ENCODE measurements at regions of chrX and their contacts with region 1.

Region 1: DNA sequence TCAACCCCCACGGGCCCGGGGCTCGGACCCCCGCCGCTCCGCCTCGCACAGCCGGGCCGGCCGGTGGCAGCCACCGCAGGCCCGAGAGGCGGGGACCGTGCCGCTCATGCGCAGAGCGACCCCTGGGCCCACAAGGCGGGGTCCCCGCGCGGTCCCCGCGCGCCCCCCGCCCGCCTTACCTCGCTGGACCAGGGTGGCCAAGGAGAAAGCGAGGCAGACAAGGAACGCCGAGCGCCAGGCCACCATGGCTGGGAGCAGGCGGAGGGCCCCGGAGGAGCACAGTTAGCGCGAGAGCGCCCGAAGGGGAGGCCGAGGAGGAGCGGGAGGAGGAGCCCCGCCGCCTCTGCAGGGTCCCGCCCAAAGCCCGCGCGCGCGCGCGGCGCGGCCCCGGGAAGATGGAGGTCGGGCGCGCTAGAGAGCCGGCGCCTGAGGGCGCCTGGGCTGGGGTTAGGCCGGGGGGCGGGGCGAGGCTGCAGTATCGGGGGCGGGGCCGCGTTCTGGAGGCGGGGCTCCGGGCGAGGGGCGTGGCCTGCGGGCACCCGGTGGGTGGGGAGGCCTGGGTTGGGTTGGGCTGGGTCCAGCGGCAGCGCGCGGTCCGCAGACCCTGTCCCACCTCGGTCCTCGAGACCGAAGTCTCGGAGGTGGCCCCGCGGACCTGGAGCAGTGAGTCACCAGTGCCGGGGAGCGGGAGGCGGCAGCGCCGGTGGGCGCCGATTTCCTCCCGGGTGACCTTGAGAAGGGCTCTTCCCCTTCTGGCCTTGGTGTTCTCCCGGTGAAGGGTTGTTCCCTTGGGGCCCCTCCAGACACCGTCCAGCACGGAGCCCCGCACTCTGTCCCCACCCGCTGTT is at the start of gene CD99L2:
- DNase-seq: peak; percentile 73 to 86
- ATAC-seq: peak; percentile 82 to 86
- H3K4me3 ChIP-seq: peak within 1 kb of the TSS; percentile 60 to 75 (median 69)
- H3K27ac ChIP-seq: peak within 1 kb of the TSS; percentile 84 to 92 (median 86)
- H3K4me1 ChIP-seq: peaks cover 4 to 7% of the 10 kb centered on the region in 2 donors
- H3K27me3 ChIP-seq: no peaks in the 10 kb centered on the region
- CTCF ChIP-seq: no peak
- POLR2A ChIP-seq: peak; percentile 68
- total RNA-seq, gene CD99L2: 202 to 289 (median 251) TPM

Region 2: GRCh38 chrX:150693775-150694574 is 204.6 kb before region 1 on chrX:
- in situ Hi-C with region 1: no loop called
- intact Hi-C with region 1: loop called (anchors 5 kb)
- DNase-seq: peak; percentile 10 to 61
- ATAC-seq: peak; percentile 51 to 80
- H3K4me3 ChIP-seq: peak overlapping the region; percentile 60 to 68 (median 62)
- H3K27ac ChIP-seq: peak overlapping the region; percentile 82 to 87 (median 84)
- H3K4me1 ChIP-seq: peaks cover 5 to 7% of the 10 kb centered on the region in 2 donors
- H3K27me3 ChIP-seq: no peaks in the 10 kb centered on the region
- CTCF ChIP-seq: no peak
- POLR2A ChIP-seq: no peak

Region 3: DNA sequence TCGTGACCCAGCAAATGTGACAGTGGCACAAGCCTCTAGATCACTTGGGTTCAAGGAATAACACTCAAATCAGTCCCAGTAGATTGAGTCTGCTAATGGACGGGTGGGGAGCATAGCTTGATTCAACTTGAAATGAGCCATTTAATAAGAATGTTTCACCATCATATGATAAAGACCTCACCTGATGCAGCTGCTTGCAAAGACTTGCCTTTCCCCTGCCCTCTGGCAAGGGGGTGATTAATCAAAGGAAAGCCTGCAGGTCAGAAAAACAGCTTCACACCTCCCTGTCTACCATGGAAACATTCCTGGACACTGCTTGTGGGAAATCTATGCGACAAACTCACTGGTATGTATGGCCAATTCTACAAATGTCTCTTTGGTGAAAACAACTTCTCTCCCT is 54.6 kb before region 1 on chrX:
- in situ Hi-C with region 1: no loop called
- intact Hi-C with region 1: loop called (anchors 2 kb)
- DNase-seq: no peak
- ATAC-seq: no peak
- H3K4me3 ChIP-seq: no peak overlapping the region
- H3K27ac ChIP-seq: peak overlapping the region; percentile 77 to 84 (median 80)
- H3K4me1 ChIP-seq: peaks cover 23 to 46% of the 10 kb centered on the region in 2 donors
- H3K27me3 ChIP-seq: no peaks in the 10 kb centered on the region
- CTCF ChIP-seq: no peak
- POLR2A ChIP-seq: no peak

Region 4: DNA sequence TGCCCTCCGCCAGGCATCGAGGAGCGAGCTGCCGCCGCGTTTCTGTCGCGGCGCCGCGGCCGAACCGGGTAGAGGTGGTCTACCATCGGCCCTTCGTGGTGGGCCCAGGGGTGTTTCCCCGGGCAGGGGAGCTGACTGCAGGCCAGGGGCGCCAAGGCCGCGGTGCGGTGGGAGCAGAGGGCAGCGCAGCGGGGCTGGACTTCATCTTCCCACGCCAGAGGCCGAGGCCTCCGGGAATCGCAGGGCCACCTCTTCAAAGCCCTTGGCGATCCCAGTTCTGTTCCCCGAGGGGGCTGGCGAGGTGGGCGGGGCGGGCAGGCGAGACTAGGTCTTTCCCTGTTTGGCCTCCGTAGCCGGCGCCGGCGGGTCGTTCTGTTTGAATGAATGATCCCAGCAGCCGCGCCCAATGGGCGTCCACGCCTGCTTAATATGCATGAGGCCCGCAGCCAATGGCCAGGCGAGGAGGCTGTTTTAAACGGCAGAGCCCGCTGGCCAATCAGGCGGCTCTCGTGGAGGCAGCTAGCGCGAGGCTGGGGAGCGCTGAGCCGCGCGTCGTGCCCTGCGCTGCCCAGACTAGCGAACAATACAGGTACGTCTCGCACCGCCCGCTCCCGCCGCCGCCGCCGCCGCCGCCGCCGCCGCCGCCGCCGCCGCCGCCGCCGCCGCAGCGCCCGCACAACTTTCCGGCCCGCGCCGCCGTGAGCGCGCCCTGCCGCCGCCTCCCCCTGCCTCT is 84.4 kb after region 1 on chrX and contains the start of gene HMGB3:
- in situ Hi-C with region 1: no loop called
- intact Hi-C with region 1: loop called (anchors 10 kb)
- DNase-seq: peak; percentile 68 to 83
- ATAC-seq: peak; percentile 95 to 97
- H3K4me3 ChIP-seq: peak within 1 kb of the TSS; percentile 53 to 58 (median 56)
- H3K27ac ChIP-seq: peak within 1 kb of the TSS in 3 of 4 donors; percentile 36 to 78 (median 72)
- H3K4me1 ChIP-seq: peaks cover 0 to 5% of the 10 kb centered on the region in 2 donors
- H3K27me3 ChIP-seq: no peaks in the 10 kb centered on the region
- CTCF ChIP-seq: no peak
- POLR2A ChIP-seq: peak; percentile 47 to 73
- total RNA-seq, gene HMGB3: 15.0 to 58.3 (median 18.7) TPM

Region 5: GRCh38 chrX:151042842-151043241 is 144.3 kb after region 1 on chrX:
- in situ Hi-C with region 1: no loop called
- intact Hi-C with region 1: no loop called
- DNase-seq: no peak
- ATAC-seq: no peak
- H3K4me3 ChIP-seq: no peak overlapping the region
- H3K27ac ChIP-seq: no peak overlapping the region
- H3K4me1 ChIP-seq: no peaks in the 10 kb centered on the region
- H3K27me3 ChIP-seq: no peaks in the 10 kb centered on the region
- CTCF ChIP-seq: no peak
- POLR2A ChIP-seq: no peak

Measured in gastrocnemius medialis (tissue), 4 donors.